ENCODE measurements at regions of chr17 and their contacts with region 1.

Region 1: GRCh38 chr17:1455797-1456599 is at the start of gene CRK:
- DNase-seq: peak; percentile 99
- ATAC-seq: peak; percentile 93
- H3K4me3 Mint-ChIP-seq: peak within 1 kb of the TSS; percentile 82
- H3K27ac Mint-ChIP-seq: peak within 1 kb of the TSS; percentile 89
- H3K4me1 Mint-ChIP-seq: peaks cover 46% of the 10 kb centered on the region
- H3K27me3 Mint-ChIP-seq: peaks cover 9% of the 10 kb centered on the region
- total RNA-seq, gene CRK: 10.1 to 11.6 TPM

Region 2: DNA sequence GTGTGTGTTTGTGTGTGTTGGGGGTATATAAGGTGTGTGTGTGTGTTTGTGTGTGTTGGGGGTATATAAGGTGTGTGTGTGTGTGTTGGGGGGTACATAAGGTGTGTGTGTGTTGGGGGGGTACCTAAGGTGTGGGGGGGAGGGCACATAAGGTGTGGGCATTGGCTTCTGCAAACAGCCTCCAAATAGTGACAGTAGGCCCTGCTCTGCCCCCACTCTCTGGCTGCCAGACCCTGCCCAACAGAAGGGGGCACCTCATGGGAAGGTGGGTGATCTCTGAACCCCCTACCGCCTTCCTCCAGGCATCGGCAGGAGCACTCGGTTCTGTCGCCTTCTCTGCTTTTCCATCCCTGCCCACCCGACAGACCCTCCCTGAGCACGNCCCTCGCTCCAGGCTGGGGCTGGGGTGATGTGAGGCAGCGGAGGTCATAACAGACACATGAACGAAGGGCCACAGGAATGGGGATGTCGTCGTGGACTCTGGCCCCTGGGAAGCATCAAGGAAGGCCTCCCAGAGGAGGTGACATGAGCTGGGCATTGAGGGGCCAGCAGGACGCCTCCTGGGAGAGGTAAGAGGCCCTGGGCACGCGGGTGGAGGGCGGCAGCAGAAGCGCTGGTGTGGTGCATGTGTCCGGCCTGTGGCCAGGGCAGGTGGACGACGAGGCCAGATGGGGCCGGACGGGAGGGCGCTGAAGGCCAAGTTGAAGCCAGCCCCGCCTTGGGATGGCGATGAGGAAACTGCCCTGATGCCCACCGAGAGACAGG is 966.8 kb before region 1 on chr17:
- CTCF ChIA-PET with region 1: no interaction called
- POLR2A ChIA-PET with region 1: no interaction called
- intact Hi-C with region 1: no loop called
- DNase-seq: peak; percentile 54
- ATAC-seq: peak; percentile 54
- H3K4me3 Mint-ChIP-seq: peak overlapping the region; percentile 78
- H3K27ac Mint-ChIP-seq: peak overlapping the region; percentile 80
- H3K4me1 Mint-ChIP-seq: peaks cover 7% of the 10 kb centered on the region
- H3K27me3 Mint-ChIP-seq: no peaks in the 10 kb centered on the region

Region 3: DNA sequence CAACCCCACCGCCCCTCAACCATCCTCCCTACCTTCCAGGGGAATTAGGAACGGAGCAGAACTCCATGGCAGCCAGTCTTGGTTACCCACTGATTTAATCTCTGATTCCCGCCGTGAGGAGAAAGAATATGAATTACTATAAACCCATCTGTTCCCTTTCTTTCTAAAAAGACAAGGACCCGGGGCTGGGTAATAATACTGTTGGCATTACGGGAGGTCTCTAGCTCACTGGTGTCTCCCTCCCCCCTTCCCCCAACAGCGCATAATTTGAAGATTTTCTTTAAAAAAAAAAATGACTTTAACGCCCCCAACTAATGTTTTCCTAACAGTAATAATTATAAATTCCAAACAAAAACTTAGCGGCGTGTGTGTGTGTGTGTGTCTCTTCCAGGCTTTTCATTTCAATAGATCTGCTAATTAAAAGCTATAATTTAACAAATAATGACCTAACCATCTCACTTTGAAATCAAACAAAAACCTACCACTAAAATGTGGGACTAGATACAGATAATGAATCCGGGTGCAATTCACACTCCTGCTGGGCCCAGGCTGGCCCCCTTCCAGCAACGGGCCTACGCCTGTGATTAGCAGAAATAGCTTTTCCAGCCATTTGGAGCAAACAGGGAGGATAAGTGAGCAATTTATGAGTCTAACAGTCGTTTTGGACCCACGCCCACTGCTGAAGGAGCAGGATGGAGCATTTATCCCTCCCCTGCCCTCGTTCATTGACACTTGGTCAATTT is 204.0 kb before region 1 on chr17:
- CTCF ChIA-PET with region 1: no interaction called
- POLR2A ChIA-PET with region 1: interaction called, 11 read pairs
- intact Hi-C with region 1: no loop called
- DNase-seq: no peak
- ATAC-seq: no peak
- H3K4me3 Mint-ChIP-seq: no peak overlapping the region
- H3K27ac Mint-ChIP-seq: no peak overlapping the region
- H3K4me1 Mint-ChIP-seq: peaks cover 4% of the 10 kb centered on the region
- H3K27me3 Mint-ChIP-seq: peaks cover 9% of the 10 kb centered on the region

Region 4: GRCh38 chr17:1488030-1488863 is 32.2 kb after region 1 on chr17:
- CTCF ChIA-PET with region 1: no interaction called
- POLR2A ChIA-PET with region 1: interaction called, 4 read pairs
- intact Hi-C with region 1: loop called in 1 of 2 experiments (anchors 1 kb)
- DNase-seq: peak; percentile 77
- ATAC-seq: peak; percentile 10
- H3K4me3 Mint-ChIP-seq: peak overlapping the region; percentile 71
- H3K27ac Mint-ChIP-seq: no peak overlapping the region
- H3K4me1 Mint-ChIP-seq: peaks cover 42% of the 10 kb centered on the region
- H3K27me3 Mint-ChIP-seq: no peaks in the 10 kb centered on the region

Region 5: GRCh38 chr17:1561400-1562175 is 105.6 kb after region 1 on chr17:
- CTCF ChIA-PET with region 1: no interaction called
- POLR2A ChIA-PET with region 1: no interaction called
- intact Hi-C with region 1: loop called in 1 of 2 experiments (anchors 1 kb)
- DNase-seq: peak; percentile 64
- ATAC-seq: peak; percentile 35
- H3K4me3 Mint-ChIP-seq: peak overlapping the region; percentile 81
- H3K27ac Mint-ChIP-seq: no peak overlapping the region
- H3K4me1 Mint-ChIP-seq: peaks cover 27% of the 10 kb centered on the region
- H3K27me3 Mint-ChIP-seq: no peaks in the 10 kb centered on the region

Region 6: DNA sequence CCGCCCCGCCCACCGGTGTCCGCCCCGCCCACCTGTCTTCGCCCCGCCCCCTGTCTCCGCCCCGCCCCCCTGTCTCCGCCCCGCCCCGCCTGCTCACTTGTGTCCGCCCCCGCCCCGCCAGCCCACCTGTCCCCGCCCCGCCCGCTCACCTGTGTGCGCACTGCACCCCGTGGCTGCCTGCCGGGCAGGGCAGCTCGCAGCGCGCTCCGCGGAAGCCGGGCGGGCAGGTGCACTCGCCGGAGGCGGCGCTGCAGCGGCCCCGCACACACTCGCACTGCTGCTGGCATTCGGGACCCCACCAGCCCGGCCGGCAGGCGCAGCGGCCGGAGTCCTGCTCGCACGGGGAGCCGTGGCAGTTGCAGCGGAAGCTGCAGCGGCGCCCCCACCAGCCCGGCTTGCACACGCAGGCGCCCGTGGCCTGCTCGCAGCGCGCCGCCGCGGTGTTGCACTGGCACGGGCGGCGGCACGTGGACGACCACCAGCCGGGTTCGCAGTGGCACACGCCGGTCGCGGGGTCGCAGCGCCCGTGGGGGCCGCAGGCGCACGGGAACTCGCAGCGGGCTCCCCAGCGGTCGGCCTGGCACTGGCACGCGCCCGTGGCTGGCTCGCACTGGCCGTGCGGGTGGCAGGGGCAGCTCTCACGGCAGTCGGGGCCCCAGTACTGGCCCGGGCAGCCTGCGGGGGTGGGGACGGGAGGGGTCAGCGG is 187.4 kb after region 1 on chr17:
- CTCF ChIA-PET with region 1: no interaction called
- POLR2A ChIA-PET with region 1: no interaction called
- intact Hi-C with region 1: loop called in 1 of 2 experiments (anchors 1 kb)
- DNase-seq: peak; percentile 78
- ATAC-seq: peak; percentile 20
- H3K4me3 Mint-ChIP-seq: no peak overlapping the region
- H3K27ac Mint-ChIP-seq: no peak overlapping the region
- H3K4me1 Mint-ChIP-seq: peaks cover 19% of the 10 kb centered on the region
- H3K27me3 Mint-ChIP-seq: no peaks in the 10 kb centered on the region